Left cardiac atrium (tissue), 4 donors: ENCODE measurements at regions of chr6 and their contacts with region 1.

Region 1: GRCh38 chr6:97594844-97595243 is 311.8 kb upstream of the MMS22L start:
- DNase-seq: no peak
- ATAC-seq: peak; percentile 95 to 97

Region 2: GRCh38 chr6:97175806-97176205 is 419.0 kb before region 1 on chr6:
- intact Hi-C with region 1: no loop called
- DNase-seq: no peak
- ATAC-seq: no peak

Region 3: DNA sequence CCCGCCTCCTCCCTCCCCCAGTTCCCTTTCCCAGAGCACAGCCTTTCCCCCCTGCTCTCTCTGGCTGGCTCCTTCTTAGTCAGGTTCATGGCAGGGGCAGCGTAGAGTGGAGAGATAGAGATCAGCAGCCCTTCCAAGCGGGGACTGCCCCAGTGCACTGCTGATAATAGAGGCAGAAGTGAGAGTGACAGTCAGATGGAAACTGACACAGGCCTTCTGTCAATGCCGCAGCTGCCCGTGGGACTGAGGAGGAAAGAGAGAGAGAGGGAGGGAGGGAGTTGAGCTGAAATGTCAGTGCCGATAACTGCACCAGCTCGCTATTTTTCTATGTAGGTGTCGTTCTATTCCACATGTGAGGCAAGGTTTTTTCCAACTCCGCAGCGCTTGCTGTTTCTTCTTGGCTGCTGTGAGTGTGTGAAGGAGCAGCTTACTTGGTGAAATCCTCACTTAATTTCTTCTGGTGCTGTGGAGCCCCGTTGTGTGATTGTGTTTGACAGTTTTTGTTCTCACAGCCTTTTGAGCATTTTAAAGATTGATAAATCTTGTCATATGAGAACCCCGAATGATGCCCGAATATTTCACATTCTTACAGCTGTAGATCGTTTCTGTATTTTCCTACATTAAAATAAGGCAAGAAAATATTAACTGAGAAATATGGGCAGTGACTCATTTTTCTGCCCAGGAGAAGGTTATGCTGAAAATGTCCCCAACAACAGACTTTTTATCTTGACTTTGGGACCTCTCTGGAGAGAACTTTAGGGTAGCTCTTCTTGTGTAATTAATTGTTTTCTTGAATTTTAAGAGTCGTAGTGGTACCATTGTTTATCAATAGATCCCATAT is 74.6 kb after region 1 on chr6:
- intact Hi-C with region 1: loop called in 1 of 2 experiments (anchors 5 kb)
- DNase-seq: peak; percentile 43
- ATAC-seq: peak; percentile 92 to 98